ENCODE measurements at regions of chr12 and their contacts with region 1.

Region 1: DNA sequence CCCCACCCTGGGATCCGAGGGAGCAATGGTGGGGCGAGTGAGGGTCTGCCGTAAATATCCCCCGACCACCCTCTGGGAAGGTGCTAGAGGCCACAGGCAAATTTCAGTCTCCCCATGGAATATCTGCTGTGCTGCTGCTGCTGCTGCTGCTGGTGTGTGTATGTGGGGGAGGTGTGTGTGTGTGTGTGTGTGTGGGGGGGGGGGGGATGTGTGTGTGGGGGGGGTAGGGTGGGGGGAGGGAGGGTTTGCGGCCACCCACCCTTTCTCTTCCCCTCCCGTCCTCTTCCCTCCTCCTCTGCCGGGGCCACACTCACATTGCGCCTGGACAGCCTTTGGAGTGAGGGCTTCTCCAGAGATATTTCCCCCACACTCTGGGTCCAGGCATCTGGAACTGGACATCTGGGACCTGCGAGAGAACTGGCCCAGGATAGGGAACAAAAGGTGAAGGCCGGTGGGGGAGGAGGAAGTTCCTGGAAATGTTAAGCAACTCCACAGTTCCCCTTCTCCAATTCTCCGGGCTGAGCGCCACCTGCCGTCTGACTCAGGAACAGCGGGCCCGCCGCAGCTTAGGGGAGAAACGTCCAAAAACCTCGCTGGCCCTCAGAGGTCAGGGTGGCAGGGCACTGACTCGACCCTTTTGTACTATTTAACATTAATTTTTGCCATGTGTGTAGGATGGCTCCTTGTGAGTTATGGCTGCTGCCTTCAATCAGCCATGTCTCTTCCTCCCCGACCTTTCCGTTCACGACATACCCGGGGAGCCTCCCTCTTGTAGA is at the start of gene C1RL:
- DNase-seq: peak; percentile 92
- ATAC-seq: peak; percentile 84 to 86
- total RNA-seq, gene C1RL: 23.0 to 29.8 TPM

Region 2: GRCh38 chr12:7060353-7060954 is 48.5 kb before region 1 on chr12 and contains the start of gene C1S:
- intact Hi-C with region 1: loop called in 1 of 2 experiments (anchors 2 kb)
- DNase-seq: peak; percentile 74
- ATAC-seq: peak; percentile 98 to 99
- total RNA-seq, gene C1S: 222 to 287 TPM

Region 3: GRCh38 chr12:7460375-7461259 is 351.6 kb after region 1 on chr12:
- intact Hi-C with region 1: no loop called
- DNase-seq: no peak
- ATAC-seq: peak; percentile 63 to 80

Region 4: DNA sequence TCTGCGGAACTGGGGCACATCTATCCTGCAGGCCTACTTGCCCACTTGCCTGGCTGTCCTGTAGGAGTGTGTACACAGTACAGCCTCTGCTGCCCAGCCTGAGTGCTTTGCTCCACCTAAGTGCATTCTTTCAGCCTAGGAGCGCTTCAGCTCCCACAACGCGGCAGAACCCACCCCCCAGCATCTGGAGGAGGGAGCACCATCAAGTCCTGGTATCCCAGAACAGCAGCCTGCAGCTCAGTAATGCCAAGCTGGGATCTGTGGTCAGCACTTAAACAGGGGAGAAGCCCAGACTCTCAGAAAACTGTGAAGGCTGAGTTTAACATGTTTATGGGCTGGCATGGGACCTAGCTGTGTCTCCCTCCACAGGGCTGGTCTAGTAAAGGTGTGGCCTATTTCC is 474.6 kb after region 1 on chr12:
- intact Hi-C with region 1: no loop called
- DNase-seq: no peak
- ATAC-seq: no peak